Testis (tissue), 5 donors: ENCODE measurements at regions of chr10 and their contacts with region 1.

Region 1: GRCh38 chr10:114703377-114704107 is 45.5 kb upstream of the ABLIM1 start:
- DNase-seq: peak; percentile 23
- H3K4me3 ChIP-seq: no peak overlapping the region
- H3K27ac ChIP-seq: no peak overlapping the region
- H3K4me1 ChIP-seq: no peaks in the 10 kb centered on the region
- H3K27me3 ChIP-seq: no peaks in the 10 kb centered on the region
- CTCF ChIP-seq: peak; percentile 41 to 53 (median 46)
- POLR2A ChIP-seq: no peak

Region 2: GRCh38 chr10:114550756-114551635 is 152.5 kb before region 1 on chr10:
- intact Hi-C with region 1: loop called (anchors 10 kb)
- DNase-seq: peak; percentile 76
- H3K4me3 ChIP-seq: no peak overlapping the region
- H3K27ac ChIP-seq: peak overlapping the region; percentile 41 to 81
- H3K4me1 ChIP-seq: peaks cover 15% of the 10 kb centered on the region
- H3K27me3 ChIP-seq: no peaks in the 10 kb centered on the region
- CTCF ChIP-seq: peak; percentile 26 to 65 (median 53)
- POLR2A ChIP-seq: no peak

Region 3: DNA sequence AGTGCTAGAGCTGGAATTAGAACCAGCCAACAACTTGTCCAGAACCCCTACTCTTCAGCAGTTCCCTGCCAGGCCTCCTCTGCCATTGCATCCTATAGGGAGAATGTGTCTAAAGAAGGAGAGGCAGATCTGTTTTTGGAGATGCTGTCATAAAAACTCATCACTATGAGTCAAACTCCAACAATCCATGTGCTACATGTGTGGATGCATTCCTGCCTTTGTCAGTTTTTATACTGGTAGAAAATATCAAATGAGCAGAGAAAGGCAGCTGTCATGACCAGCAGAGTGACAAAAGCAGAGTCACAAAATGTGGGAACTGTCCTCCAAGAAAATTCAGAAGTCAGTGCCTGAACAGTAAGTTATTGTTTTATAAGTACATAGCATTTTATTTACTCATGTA is 138.5 kb before region 1 on chr10:
- intact Hi-C with region 1: no loop called
- DNase-seq: no peak
- H3K4me3 ChIP-seq: no peak overlapping the region
- H3K27ac ChIP-seq: no peak overlapping the region
- H3K4me1 ChIP-seq: no peaks in the 10 kb centered on the region
- H3K27me3 ChIP-seq: no peaks in the 10 kb centered on the region
- CTCF ChIP-seq: no peak
- POLR2A ChIP-seq: no peak

Region 4: GRCh38 chr10:114603948-114604347 is 99.6 kb before region 1 on chr10:
- intact Hi-C with region 1: no loop called
- DNase-seq: no peak
- H3K4me3 ChIP-seq: no peak overlapping the region
- H3K27ac ChIP-seq: peak overlapping the region in 1 of 2 donors; percentile 66
- H3K4me1 ChIP-seq: peaks cover 9% of the 10 kb centered on the region
- H3K27me3 ChIP-seq: no peaks in the 10 kb centered on the region
- CTCF ChIP-seq: no peak
- POLR2A ChIP-seq: no peak